WTC11 (cell line): ENCODE measurements at regions of chr14 and their contacts with region 1.

Region 1: GRCh38 chr14:21071225-21072030 is 1.3 kb downstream of the ARHGEF40 start:
- DNase-seq: peak; percentile 88
- ATAC-seq: peak; percentile 46
- H3K4me3 Mint-ChIP-seq: peak overlapping the region; percentile 89
- H3K27ac Mint-ChIP-seq: peak overlapping the region; percentile 80
- H3K4me1 Mint-ChIP-seq: peaks cover 33% of the 10 kb centered on the region
- H3K27me3 Mint-ChIP-seq: peaks cover 4% of the 10 kb centered on the region; the same call in 1 of the 2 replicates
- CTCF ChIP-seq: no peak

Region 2: GRCh38 chr14:21024585-21025370 is 46.6 kb before region 1 on chr14 and contains the start of gene NDRG2:
- CTCF ChIA-PET with region 1: interaction called, 12 read pairs
- POLR2A ChIA-PET with region 1: interaction called, 12 read pairs
- DNase-seq: peak; percentile 92
- ATAC-seq: peak; percentile 74
- H3K4me3 Mint-ChIP-seq: peak within 1 kb of the TSS; percentile 93
- H3K27ac Mint-ChIP-seq: peak within 1 kb of the TSS; percentile 99
- H3K4me1 Mint-ChIP-seq: peaks cover 39% of the 10 kb centered on the region
- H3K27me3 Mint-ChIP-seq: peaks cover 35% of the 10 kb centered on the region
- CTCF ChIP-seq: no peak
- total RNA-seq, gene NDRG2: 28.5 to 32.2 TPM (median 30.1 TPM) in 3 replicates

Region 3: GRCh38 chr14:21092273-21093011 is 21.0 kb after region 1 on chr14:
- CTCF ChIA-PET with region 1: interaction called, 165 read pairs
- POLR2A ChIA-PET with region 1: interaction called, 74 read pairs
- DNase-seq: peak; percentile 94
- ATAC-seq: peak; percentile 27
- H3K4me3 Mint-ChIP-seq: peak overlapping the region; percentile 66
- H3K27ac Mint-ChIP-seq: peak overlapping the region; percentile 94
- H3K4me1 Mint-ChIP-seq: peaks cover 64% of the 10 kb centered on the region
- H3K27me3 Mint-ChIP-seq: no peaks in the 10 kb centered on the region
- CTCF ChIP-seq: peak; percentile 100

Region 4: GRCh38 chr14:21103710-21104447 is 32.5 kb after region 1 on chr14:
- CTCF ChIA-PET with region 1: interaction called, 142 read pairs
- POLR2A ChIA-PET with region 1: interaction called, 16 read pairs
- DNase-seq: peak; percentile 96
- ATAC-seq: peak; percentile 79
- H3K4me3 Mint-ChIP-seq: peak overlapping the region; percentile 93
- H3K27ac Mint-ChIP-seq: peak overlapping the region; percentile 87
- H3K4me1 Mint-ChIP-seq: peaks cover 73% of the 10 kb centered on the region
- H3K27me3 Mint-ChIP-seq: no peaks in the 10 kb centered on the region
- CTCF ChIP-seq: peak; percentile 24; the same call in 1 of the 2 replicates